ENCODE measurements at regions of chr11 and their contacts with region 1.

Region 1: DNA sequence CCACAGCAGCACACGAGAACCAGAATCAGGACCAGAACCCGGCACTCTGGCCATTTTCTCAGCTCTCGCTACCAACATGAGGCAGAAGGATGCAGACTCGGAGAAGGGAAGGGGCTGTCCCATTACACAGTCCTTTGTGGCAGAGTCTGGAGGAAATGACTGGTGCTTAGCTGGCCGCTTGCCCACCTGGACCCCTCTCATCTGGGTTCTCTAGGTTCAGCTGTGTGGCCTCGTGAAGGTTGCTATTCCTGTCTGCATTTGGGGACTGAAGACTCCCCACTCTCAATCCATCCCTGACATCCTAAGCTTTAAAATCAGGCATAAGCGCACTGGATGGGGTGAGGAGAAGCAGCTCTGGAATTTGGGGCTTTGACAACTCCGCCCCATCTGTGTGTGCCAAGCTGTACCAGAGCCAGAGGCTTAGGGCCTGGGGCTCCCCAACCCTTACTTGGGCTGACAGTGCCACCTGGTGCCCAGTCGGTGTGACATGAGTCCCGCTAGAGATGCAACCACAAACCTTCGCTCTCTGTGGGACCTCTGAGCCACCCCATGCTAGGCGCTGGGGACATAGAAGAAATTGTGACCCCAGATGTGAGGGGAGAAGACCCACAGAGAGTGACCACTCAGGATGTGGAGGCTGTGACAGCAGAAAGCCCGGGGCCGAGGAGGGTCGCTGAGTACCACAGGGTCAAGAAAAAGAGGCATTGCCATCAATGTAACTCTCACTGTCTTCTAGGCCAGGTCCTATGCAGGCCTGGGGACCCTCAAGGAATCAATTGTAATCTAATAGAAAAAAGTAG is 35.9 kb upstream of the FCHSD2 start:
- DNase-seq: peak; percentile 68
- ATAC-seq: peak; percentile 99
- H3K4me3 ChIP-seq: no peak overlapping the region
- H3K27ac ChIP-seq: peak overlapping the region; percentile 0
- H3K4me1 ChIP-seq: peaks cover 44% of the 10 kb centered on the region
- H3K27me3 ChIP-seq: no peaks in the 10 kb centered on the region
- CTCF ChIP-seq: peak; percentile 82 to 95 (median 91)
- EP300 ChIP-seq: no peak
- POLR2A ChIP-seq: no peak
- RAD21 ChIP-seq: peak; percentile 99

Region 2: GRCh38 chr11:72814286-72815109 is 363.5 kb before region 1 on chr11 and contains the start of gene ATG16L2:
- CTCF ChIA-PET with region 1: interaction called, 7 read pairs
- POLR2A ChIA-PET with region 1: interaction called, 4 read pairs
- RAD21 ChIA-PET with region 1: interaction called, 13 read pairs
- SMC1A ChIA-PET with region 1: interaction called, 5 read pairs
- in situ Hi-C with region 1: no loop called
- intact Hi-C with region 1: no loop called
- DNase-seq: no peak
- ATAC-seq: peak; percentile 74
- H3K4me3 ChIP-seq: peak within 1 kb of the TSS; percentile 89
- H3K27ac ChIP-seq: peak within 1 kb of the TSS; percentile 98
- H3K4me1 ChIP-seq: peaks cover 7% of the 10 kb centered on the region; the same call in 1 of the 2 replicates
- H3K27me3 ChIP-seq: no peaks in the 10 kb centered on the region
- CTCF ChIP-seq: peak in 2 of 3 experiments; percentile 15 to 19; a peak in 1 of 6 replicates
- EP300 ChIP-seq: 0 out of 4 replicates have a peak, but pooled peaks of 1 of the 2 experiments have one; percentile 3
- POLR2A ChIP-seq: peak; percentile 81
- RAD21 ChIP-seq: 0 out of 2 replicates have a peak, but pooled peaks have one; percentile 20
- polyA plus RNA-seq, gene ATG16L2: 1.9 to 5.3 TPM

Region 3: DNA sequence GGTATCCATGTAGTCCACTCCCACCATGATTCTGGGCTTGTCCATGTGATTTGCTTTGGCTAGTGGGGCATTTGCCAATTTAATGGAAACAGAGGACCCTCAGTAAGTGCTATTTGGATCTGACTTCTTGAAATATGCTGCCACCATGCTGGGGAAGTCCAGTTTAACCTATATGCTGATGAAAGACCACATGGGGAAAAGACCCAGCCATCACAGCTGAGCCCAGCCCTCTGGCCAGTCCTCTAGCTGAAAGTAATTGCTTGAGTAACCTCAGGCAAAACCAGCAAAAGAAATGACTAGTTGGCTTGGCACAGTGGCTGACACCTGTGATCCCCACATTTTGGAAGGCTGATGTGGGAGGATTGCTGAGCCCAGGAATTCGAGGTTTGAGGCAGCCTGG is 302.2 kb before region 1 on chr11:
- CTCF ChIA-PET with region 1: interaction called, 15 read pairs
- POLR2A ChIA-PET with region 1: interaction called, 3 read pairs
- RAD21 ChIA-PET with region 1: interaction called, 8 read pairs
- SMC1A ChIA-PET with region 1: interaction called, 7 read pairs
- in situ Hi-C with region 1: no loop called
- intact Hi-C with region 1: no loop called
- DNase-seq: no peak
- ATAC-seq: peak; percentile 64
- H3K4me3 ChIP-seq: no peak overlapping the region
- H3K27ac ChIP-seq: no peak overlapping the region
- H3K4me1 ChIP-seq: no peaks in the 10 kb centered on the region
- H3K27me3 ChIP-seq: no peaks in the 10 kb centered on the region
- CTCF ChIP-seq: no peak
- EP300 ChIP-seq: no peak
- POLR2A ChIP-seq: no peak
- RAD21 ChIP-seq: no peak

Region 4: GRCh38 chr11:72930008-72930407 is 248.0 kb before region 1 on chr11:
- CTCF ChIA-PET with region 1: interaction called, 95 read pairs
- POLR2A ChIA-PET with region 1: no interaction called
- RAD21 ChIA-PET with region 1: interaction called, 68 read pairs
- SMC1A ChIA-PET with region 1: interaction called, 32 read pairs
- in situ Hi-C with region 1: loop called (anchors 5 kb)
- intact Hi-C with region 1: loop called (anchors 2 kb)
- DNase-seq: no peak
- ATAC-seq: peak; percentile 44
- H3K4me3 ChIP-seq: no peak overlapping the region
- H3K27ac ChIP-seq: no peak overlapping the region
- H3K4me1 ChIP-seq: no peaks in the 10 kb centered on the region
- H3K27me3 ChIP-seq: no peaks in the 10 kb centered on the region
- CTCF ChIP-seq: no peak
- EP300 ChIP-seq: no peak
- POLR2A ChIP-seq: no peak
- RAD21 ChIP-seq: no peak

Region 5: DNA sequence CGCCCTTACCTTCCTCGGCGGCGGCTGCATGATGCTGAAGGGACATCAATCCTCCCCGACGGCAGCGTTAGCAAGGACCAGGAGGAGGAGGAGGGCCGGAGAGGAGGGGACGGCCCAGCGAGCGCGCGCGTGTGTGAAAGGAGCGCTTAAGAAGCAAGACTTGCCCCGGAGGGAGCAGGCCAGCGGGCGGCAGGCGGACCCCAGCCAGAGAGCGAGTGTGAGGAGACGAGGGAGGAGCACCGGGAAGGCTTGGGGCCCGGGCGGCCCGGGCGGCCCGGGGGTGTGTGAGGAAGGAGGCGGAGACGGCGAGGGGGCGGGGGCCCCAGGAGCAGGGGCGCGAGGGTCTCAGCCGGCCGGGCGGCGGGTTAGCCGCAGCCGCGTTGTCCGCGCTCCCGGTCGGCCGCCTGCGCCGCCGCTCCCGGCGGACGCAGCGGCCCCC is 36.1 kb before region 1 on chr11:
- CTCF ChIA-PET with region 1: interaction called, 98 read pairs
- POLR2A ChIA-PET with region 1: interaction called, 8 read pairs
- RAD21 ChIA-PET with region 1: interaction called, 93 read pairs
- SMC1A ChIA-PET with region 1: interaction called, 926 read pairs
- in situ Hi-C with region 1: no loop called
- intact Hi-C with region 1: loop called (anchors 1 kb)
- DNase-seq: no peak
- ATAC-seq: peak; percentile 25
- H3K4me3 ChIP-seq: peak overlapping the region; percentile 90
- H3K27ac ChIP-seq: peak overlapping the region; percentile 99
- H3K4me1 ChIP-seq: peaks cover 36% of the 10 kb centered on the region
- H3K27me3 ChIP-seq: no peaks in the 10 kb centered on the region
- CTCF ChIP-seq: 0 out of 6 replicates have a peak, but pooled peaks of 1 of the 3 experiments have one; percentile 0
- EP300 ChIP-seq: no peak
- POLR2A ChIP-seq: peak; percentile 65
- RAD21 ChIP-seq: no peak

Region 6: DNA sequence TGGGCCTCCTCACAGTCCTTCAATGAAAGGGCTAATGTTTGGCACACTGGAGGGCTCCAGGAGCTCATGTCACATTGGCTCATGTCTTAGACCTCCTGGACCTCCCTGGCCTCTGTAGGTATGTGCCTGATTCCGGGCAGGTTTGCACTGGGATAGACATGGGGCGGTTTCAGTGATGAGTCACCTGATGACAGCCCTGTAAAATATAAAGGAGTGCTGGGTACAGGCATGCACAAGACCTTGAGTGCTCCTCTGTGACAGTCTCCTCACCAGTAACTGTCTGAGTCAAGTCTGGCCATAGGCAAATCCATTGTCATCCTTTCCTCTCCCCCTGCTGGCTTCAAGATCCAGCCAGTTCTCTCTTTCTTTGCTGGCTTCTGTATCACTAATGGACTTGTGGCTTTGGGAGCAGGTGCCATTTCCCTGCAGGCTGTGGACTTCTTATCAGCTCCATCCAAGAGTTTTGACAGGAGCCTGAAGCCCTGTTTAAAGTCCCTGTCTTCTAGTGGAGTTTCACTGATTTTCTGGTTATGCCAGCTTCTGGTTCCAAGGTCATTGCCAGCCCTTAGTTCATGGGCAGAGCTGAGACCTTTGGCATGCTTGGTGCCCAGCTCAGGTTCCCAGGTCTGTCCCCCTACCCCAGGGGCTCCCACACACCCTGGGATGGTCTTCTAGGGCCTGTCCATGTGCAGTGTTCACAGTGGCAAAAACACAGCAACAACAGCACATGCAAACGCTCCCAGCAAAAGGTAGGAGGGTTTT is 17.4 kb after region 1 on chr11:
- CTCF ChIA-PET with region 1: interaction called, 14 read pairs
- POLR2A ChIA-PET with region 1: interaction called, 3 read pairs
- RAD21 ChIA-PET with region 1: interaction called, 3 read pairs
- SMC1A ChIA-PET with region 1: interaction called, 17 read pairs
- in situ Hi-C with region 1: no loop called
- intact Hi-C with region 1: no loop called
- DNase-seq: no peak
- ATAC-seq: no peak
- H3K4me3 ChIP-seq: no peak overlapping the region
- H3K27ac ChIP-seq: no peak overlapping the region
- H3K4me1 ChIP-seq: peaks cover 19% of the 10 kb centered on the region
- H3K27me3 ChIP-seq: no peaks in the 10 kb centered on the region; a peak in 1 of 4 replicates
- CTCF ChIP-seq: no peak
- EP300 ChIP-seq: no peak
- POLR2A ChIP-seq: no peak
- RAD21 ChIP-seq: no peak

Region 7: DNA sequence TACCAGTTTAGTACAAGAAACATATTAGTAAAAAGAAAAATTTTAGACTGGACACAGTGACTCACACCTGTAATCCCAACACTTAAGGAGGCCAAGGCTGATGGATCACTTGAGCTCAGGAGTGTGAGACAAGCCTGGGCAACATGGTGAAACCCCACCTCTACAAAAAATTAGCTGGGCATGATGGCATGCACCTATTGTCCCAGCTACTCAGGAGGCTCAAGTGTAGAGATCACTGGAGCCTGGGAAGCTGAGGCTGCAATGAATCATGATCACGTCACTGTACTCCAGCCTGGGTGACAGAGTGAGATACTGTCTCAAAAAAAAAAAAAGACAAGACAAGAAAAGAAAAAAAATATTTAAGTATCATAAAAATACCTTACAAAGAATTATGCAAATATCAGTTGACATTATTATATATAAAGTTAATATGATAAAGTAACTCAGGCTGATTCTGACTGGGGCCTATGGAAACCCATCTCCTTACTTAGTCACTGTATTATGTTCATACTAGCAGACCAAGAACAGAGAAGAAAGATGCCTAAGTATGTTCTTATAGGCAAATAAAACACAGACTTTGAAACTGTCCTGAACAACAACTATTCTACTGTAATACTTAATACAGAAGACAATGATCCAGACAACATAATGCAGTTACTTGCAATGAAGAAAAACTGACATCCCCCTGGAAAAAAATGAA is 392.6 kb after region 1 on chr11:
- CTCF ChIA-PET with region 1: no interaction called
- POLR2A ChIA-PET with region 1: no interaction called
- RAD21 ChIA-PET with region 1: no interaction called
- SMC1A ChIA-PET with region 1: no interaction called
- in situ Hi-C with region 1: no loop called
- intact Hi-C with region 1: no loop called
- DNase-seq: no peak
- ATAC-seq: no peak
- H3K4me3 ChIP-seq: no peak overlapping the region
- H3K27ac ChIP-seq: no peak overlapping the region
- H3K4me1 ChIP-seq: no peaks in the 10 kb centered on the region
- H3K27me3 ChIP-seq: no peaks in the 10 kb centered on the region
- CTCF ChIP-seq: no peak
- EP300 ChIP-seq: no peak
- POLR2A ChIP-seq: no peak
- RAD21 ChIP-seq: no peak

Measured in GM12878 (cell line).